Activated CD8-positive, alpha-beta memory T cell treated with anti-CD3 and anti-CD28 coated beads, Interleukin-2, amount 10 ng/mL, durations not matched to agents 7 days and 5 days (primary cell): ENCODE measurements at regions of chr3 and their contacts with region 1.

Region 1: DNA sequence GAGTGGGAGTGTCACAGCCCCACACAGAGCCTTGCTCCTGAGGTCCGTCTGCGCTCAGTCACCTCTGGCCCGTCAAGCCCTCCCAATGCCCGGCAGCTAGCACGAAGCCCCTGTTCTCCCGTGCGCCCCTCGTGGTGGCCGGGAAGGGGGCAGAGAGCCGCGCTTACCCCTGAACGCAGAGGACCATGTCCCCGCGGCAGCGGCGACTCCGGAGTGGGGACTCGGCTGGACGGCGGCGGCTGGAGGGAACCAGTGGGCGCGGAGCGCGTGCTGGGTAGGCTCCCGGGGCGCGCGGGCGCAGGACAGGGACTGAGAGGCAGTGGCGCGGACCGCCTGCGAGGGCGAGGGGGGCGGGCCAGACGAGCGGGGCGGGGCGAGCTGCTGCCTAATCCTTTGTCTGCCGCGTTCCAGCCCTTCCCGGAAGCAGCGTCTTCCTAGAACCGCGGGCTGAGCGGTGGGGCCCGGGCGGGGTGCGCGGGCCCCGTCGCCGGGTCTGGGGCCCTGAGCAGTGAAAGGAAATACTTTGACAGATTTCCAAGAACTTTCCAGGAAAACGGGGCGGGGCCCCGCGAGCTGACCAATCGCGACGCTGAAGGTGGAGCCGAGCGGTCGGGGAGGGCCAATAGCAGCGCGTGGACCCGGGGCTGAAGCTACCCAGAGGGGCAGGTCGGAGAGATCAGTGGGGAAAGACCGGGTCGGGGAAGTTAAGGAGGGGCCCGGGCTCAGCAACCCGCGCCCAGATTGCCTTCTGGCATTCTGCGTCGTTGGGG is at the start of gene CISH:
- DNase-seq: peak; percentile 99
- ATAC-seq: peak; percentile 72
- H3K4me3 Mint-ChIP-seq: peak within 1 kb of the TSS; percentile 89
- H3K27ac Mint-ChIP-seq: peak within 1 kb of the TSS; percentile 100
- H3K4me1 Mint-ChIP-seq: peaks cover 29% of the 10 kb centered on the region
- H3K27me3 Mint-ChIP-seq: no peaks in the 10 kb centered on the region
- total RNA-seq, gene CISH: 266 to 369 TPM

Region 2: DNA sequence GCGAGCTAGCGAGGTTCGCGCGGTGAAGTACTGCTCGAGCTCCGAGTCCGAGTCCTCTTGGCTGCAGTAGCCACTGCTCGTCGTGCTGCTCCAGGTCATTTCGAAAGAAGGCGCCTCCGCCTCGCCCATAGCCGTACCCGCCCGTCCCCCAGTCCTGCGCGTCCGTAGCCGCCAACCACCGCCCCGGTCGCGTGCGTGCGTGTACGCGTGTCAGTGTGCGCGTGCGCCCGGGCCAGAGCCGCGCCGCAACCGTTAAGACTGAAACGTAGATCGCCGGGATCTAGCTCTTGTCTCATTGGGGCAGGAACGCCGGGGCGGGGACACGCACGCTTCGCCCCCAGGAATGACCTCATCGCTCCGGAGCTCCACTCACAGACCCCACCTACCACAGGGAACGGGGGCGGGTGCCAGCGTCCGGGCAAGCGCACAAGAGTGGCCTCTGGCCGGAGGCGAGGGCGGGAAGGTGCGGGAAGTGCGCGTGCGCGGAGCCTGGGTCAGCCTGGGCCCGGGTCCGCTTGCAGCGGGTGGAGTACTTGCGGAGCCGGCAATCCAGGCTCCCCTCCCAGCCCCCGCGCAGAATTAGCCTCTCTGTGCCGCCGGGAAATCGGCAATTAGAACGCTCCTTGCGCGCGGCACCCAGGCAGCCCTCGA is 274.3 kb before region 1 on chr3:
- CTCF ChIA-PET with region 1: interaction called, 29 read pairs
- DNase-seq: peak; percentile 99
- ATAC-seq: peak; percentile 74
- H3K4me3 Mint-ChIP-seq: peak overlapping the region; percentile 92
- H3K27ac Mint-ChIP-seq: peak overlapping the region; percentile 94
- H3K4me1 Mint-ChIP-seq: peaks cover 50% of the 10 kb centered on the region
- H3K27me3 Mint-ChIP-seq: no peaks in the 10 kb centered on the region

Region 3: GRCh38 chr3:50568947-50569749 is 42.5 kb before region 1 on chr3 and contains the start of gene HEMK1:
- CTCF ChIA-PET with region 1: interaction called, 859 read pairs
- DNase-seq: peak; percentile 98
- ATAC-seq: peak; percentile 54
- H3K4me3 Mint-ChIP-seq: peak within 1 kb of the TSS; percentile 89
- H3K27ac Mint-ChIP-seq: peak within 1 kb of the TSS; percentile 95
- H3K4me1 Mint-ChIP-seq: peaks cover 57% of the 10 kb centered on the region
- H3K27me3 Mint-ChIP-seq: peaks cover 2% of the 10 kb centered on the region
- total RNA-seq, gene HEMK1: 49.9 to 61.3 TPM

Region 4: DNA sequence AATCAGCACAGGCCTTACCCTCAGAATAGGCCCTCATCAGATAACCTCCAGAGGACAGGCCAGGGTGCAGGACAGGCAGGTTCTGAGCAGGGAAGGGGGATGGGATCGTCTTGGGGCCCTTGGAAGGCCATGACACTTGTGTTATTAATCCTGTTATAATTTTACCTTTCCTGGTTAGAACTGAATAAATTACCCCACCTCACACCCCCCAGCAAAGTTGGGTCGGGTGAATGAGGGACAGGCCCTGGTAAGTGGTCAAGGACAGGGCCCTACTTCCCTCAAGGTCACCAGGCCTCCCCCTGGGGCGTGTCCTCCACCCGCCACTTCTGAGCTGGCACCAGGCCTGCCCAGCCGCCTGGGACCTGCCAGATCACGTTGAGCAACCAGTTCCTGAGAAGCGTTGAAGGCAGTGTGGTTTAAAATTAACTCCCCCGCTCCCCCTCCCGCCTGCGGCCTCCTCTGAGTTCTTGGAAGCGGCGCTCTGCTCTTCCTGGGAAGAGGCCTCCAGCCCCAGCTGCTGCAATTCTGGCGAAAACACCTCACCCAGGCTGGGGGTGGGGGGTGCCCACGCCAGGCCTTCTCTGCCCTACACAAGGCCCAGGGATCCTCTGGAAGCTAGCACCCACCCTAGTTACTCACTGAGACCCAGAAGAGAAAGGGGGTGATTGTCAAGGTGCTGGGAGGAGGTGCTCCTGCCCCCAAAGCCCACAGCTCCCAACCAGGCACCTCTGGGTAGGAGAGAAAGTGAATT is 10.6 kb before region 1 on chr3:
- CTCF ChIA-PET with region 1: interaction called, 143 read pairs
- DNase-seq: peak; percentile 95
- ATAC-seq: peak; percentile 65
- H3K4me3 Mint-ChIP-seq: peak overlapping the region; percentile 61
- H3K27ac Mint-ChIP-seq: peak overlapping the region; percentile 100
- H3K4me1 Mint-ChIP-seq: peaks cover 85% of the 10 kb centered on the region
- H3K27me3 Mint-ChIP-seq: no peaks in the 10 kb centered on the region

Region 5: DNA sequence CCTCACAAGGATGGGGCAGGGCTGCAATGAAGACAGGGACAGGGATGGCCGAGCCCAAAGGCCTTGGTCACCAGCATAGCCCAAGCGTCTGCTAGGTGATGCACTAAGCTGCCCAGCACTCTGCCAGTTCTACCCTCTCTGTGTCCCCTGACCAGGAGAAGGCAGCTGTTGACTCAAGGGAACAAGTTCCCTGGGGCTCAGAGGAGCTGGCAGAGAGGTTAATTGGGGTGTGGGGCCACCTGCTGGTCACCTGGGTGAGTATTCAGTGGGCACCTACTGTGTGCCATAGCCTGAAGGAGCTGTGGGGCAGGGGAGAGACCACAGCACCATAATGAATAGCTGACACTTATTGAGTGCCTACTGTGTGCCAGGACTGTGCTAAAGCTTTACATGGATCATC is 41.1 kb after region 1 on chr3:
- CTCF ChIA-PET with region 1: interaction called, 164 read pairs
- DNase-seq: peak; percentile 73
- ATAC-seq: peak; percentile 71
- H3K4me3 Mint-ChIP-seq: no peak overlapping the region
- H3K27ac Mint-ChIP-seq: no peak overlapping the region
- H3K4me1 Mint-ChIP-seq: peaks cover 7% of the 10 kb centered on the region
- H3K27me3 Mint-ChIP-seq: no peaks in the 10 kb centered on the region

Region 6: DNA sequence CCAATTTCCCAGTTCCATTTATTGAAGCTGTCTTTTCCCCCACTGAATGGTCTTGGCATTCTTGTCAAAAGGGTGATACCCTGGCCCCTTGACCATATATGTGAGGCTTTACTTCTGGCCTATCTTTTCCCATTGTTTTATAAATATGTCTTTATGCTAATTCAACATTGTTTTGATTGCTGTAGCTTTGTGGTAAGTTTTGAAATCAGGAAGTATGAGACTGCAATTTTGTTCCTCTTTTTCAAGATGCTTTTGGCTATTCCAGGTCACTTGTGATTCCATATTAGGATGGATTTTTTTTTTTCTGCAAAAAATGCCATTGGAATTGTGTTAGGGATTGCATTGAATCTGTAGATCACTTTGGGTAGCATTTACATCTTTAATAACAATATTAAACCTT is 632.3 kb after region 1 on chr3:
- CTCF ChIA-PET with region 1: no interaction called
- DNase-seq: no peak
- ATAC-seq: no peak
- H3K4me3 Mint-ChIP-seq: no peak overlapping the region
- H3K27ac Mint-ChIP-seq: no peak overlapping the region
- H3K4me1 Mint-ChIP-seq: no peaks in the 10 kb centered on the region
- H3K27me3 Mint-ChIP-seq: no peaks in the 10 kb centered on the region

Region 7: DNA sequence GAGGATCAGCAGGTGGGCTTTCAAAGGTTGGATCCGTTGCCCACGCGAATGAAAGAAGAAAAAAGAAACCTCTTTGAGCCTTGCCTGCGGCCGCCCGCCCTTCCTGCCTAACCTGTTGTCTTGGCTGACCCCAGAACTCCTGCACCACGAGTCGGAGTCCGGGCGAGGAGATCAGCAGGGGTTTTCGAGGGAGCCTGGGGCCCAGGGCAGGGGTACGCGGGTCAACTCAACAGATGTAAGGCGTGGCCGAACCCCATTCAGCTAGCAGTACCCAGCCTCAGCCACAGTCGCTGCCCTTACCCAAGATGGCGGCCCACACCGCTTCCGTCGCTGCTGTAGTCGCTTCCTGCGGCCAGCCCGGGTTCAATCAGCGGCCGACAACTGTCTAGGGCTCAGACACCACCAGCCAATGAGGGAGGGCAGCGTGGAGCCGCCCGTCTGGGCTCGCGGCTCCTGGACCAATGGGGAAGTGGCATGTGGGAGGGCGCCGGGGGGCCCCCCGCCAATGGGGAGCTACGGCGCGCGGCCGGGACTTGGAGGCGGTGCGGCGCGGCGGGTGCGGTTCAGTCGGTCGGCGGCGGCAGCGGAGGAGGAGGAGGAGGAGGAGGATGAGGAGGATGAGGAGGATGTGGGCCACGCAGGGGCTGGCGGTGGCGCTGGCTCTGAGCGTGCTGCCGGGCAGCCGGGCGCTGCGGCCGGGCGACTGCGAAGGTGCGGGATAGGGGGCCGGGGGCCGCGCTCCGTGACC is 773.3 kb after region 1 on chr3 and contains the start of gene MANF:
- CTCF ChIA-PET with region 1: interaction called, 22 read pairs
- DNase-seq: peak; percentile 99
- ATAC-seq: peak; percentile 96
- H3K4me3 Mint-ChIP-seq: peak within 1 kb of the TSS; percentile 99
- H3K27ac Mint-ChIP-seq: peak within 1 kb of the TSS; percentile 98
- H3K4me1 Mint-ChIP-seq: peaks cover 52% of the 10 kb centered on the region
- H3K27me3 Mint-ChIP-seq: no peaks in the 10 kb centered on the region
- total RNA-seq, gene MANF: 140 to 182 TPM